CD8-positive, alpha-beta T cell (primary cell): ENCODE measurements at regions of chr1 and their contacts with region 1.

Region 1: GRCh38 chr1:212455803-212456528 is 23.2 kb downstream of the NENF start:
- DNase-seq: peak; percentile 68 to 92 (median 81)
- ATAC-seq: peak; percentile 80
- H3K4me3 ChIP-seq: no peak overlapping the region
- H3K4me3 Mint-ChIP-seq: no peak overlapping the region
- H3K27ac ChIP-seq: no peak overlapping the region
- H3K27ac Mint-ChIP-seq: no peak overlapping the region
- H3K4me1 ChIP-seq: no peaks in the 10 kb centered on the region
- H3K4me1 Mint-ChIP-seq: peaks cover 2% of the 10 kb centered on the region
- H3K27me3 ChIP-seq: no peaks in the 10 kb centered on the region
- H3K27me3 Mint-ChIP-seq: no peaks in the 10 kb centered on the region
- CTCF ChIP-seq: peak; percentile 94

Region 2: GRCh38 chr1:211680752-211681327 is 775.1 kb before region 1 on chr1:
- CTCF ChIA-PET with region 1: interaction called, 56 read pairs
- POLR2A ChIA-PET with region 1: interaction called, 4 read pairs
- intact Hi-C with region 1: loop called (anchors 1 kb)
- DNase-seq: peak; percentile 45 to 93 (median 74)
- ATAC-seq: peak; percentile 93
- H3K4me3 ChIP-seq: no peak overlapping the region
- H3K4me3 Mint-ChIP-seq: no peak overlapping the region
- H3K27ac ChIP-seq: peak overlapping the region; percentile 18 to 85
- H3K27ac Mint-ChIP-seq: peak overlapping the region; percentile 94
- H3K4me1 ChIP-seq: peaks cover 8% of the 10 kb centered on the region
- H3K4me1 Mint-ChIP-seq: peaks cover 19% of the 10 kb centered on the region
- H3K27me3 ChIP-seq: no peaks in the 10 kb centered on the region
- H3K27me3 Mint-ChIP-seq: no peaks in the 10 kb centered on the region
- CTCF ChIP-seq: peak; percentile 88

Region 3: DNA sequence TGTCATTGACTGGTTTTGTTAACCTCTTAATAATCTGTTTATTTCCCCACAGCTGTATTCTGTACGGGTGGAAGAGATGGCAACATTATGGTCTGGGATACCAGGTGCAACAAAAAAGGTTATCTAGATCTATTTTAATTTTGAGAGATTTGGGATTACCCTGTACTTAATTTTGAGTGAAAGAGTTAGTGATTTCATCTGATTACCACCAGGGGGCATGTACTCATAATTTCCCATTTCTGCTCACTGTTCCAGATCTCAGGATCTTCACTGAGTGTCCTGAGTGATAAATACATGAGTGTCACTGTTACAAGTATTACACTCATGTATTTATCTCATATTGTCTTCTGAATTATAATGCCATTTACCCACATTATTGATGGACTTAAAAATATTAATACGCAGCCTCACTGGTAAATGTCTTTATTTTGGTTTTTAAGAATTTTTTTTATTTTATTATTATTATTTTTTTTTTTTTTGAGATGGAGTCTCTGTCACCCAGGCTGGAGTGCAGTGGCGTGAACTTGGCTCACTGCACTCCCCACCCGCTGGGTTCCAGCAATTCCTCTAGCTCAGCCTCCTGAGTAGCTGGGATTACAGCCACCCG is 393.0 kb before region 1 on chr1:
- CTCF ChIA-PET with region 1: interaction called, 133 read pairs
- POLR2A ChIA-PET with region 1: no interaction called
- intact Hi-C with region 1: loop called (anchors 1 to 2 kb)
- DNase-seq: peak in 2 of 9 experiments; percentile 39 to 59
- ATAC-seq: peak; percentile 62
- H3K4me3 ChIP-seq: no peak overlapping the region
- H3K4me3 Mint-ChIP-seq: no peak overlapping the region
- H3K27ac ChIP-seq: no peak overlapping the region
- H3K27ac Mint-ChIP-seq: no peak overlapping the region
- H3K4me1 ChIP-seq: no peaks in the 10 kb centered on the region
- H3K4me1 Mint-ChIP-seq: no peaks in the 10 kb centered on the region
- H3K27me3 ChIP-seq: no peaks in the 10 kb centered on the region
- H3K27me3 Mint-ChIP-seq: no peaks in the 10 kb centered on the region
- CTCF ChIP-seq: peak; percentile 74

Region 4: DNA sequence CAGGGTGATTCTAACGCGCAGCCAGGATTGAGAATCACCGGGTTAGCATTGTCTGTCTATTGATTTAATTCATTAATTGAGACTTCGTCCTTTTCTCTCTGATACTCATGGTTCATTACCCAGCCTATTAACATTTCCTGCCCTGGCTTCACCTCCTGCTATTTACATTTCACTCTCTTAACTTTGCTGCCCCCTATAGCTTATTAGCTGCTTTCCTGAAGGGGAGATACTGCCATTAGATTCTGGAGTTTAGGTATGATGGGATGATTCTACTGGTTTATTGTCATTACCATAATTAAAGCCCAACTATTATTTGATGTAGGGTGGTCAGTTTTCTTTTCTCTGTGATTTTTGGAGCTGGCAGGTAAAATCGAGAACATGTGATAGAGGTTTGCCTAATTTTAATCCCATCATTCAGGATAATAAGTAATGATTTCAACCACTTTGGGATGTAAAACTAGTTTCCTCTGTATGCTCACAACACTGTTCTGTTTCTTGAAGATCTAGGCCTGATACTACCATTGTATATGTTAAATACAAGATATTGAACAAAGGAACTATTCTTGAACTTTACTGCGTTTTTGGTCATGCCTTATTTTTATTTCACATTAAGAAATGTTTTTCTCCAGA is 164.3 kb before region 1 on chr1:
- CTCF ChIA-PET with region 1: interaction called, 20 read pairs
- POLR2A ChIA-PET with region 1: interaction called, 3 read pairs
- intact Hi-C with region 1: loop called in 1 of 2 experiments (anchors 1 kb)
- DNase-seq: peak in 2 of 9 experiments; percentile 71 to 81
- ATAC-seq: peak; percentile 73
- H3K4me3 ChIP-seq: no peak overlapping the region
- H3K4me3 Mint-ChIP-seq: peak overlapping the region; percentile 38
- H3K27ac ChIP-seq: no peak overlapping the region
- H3K27ac Mint-ChIP-seq: peak overlapping the region; percentile 16
- H3K4me1 ChIP-seq: peaks cover 63% of the 10 kb centered on the region
- H3K4me1 Mint-ChIP-seq: peaks cover 87% of the 10 kb centered on the region
- H3K27me3 ChIP-seq: no peaks in the 10 kb centered on the region
- H3K27me3 Mint-ChIP-seq: no peaks in the 10 kb centered on the region
- CTCF ChIP-seq: peak; percentile 73

Region 5: GRCh38 chr1:212432706-212433576 is 23.0 kb before region 1 on chr1 and contains the start of gene NENF:
- CTCF ChIA-PET with region 1: interaction called, 17 read pairs
- POLR2A ChIA-PET with region 1: no interaction called
- intact Hi-C with region 1: loop called in 1 of 2 experiments (anchors 2 kb)
- DNase-seq: peak; percentile 44 to 86 (median 70)
- ATAC-seq: peak; percentile 99
- H3K4me3 ChIP-seq: peak within 1 kb of the TSS; percentile 61 to 71
- H3K4me3 Mint-ChIP-seq: peak within 1 kb of the TSS; percentile 81
- H3K27ac ChIP-seq: peak within 1 kb of the TSS in 1 of 2 experiments; percentile 55
- H3K27ac Mint-ChIP-seq: peak within 1 kb of the TSS; percentile 74
- H3K4me1 ChIP-seq: peaks cover 17% of the 10 kb centered on the region
- H3K4me1 Mint-ChIP-seq: peaks cover 34% of the 10 kb centered on the region
- H3K27me3 ChIP-seq: no peaks in the 10 kb centered on the region
- H3K27me3 Mint-ChIP-seq: no peaks in the 10 kb centered on the region
- CTCF ChIP-seq: no peak
- total RNA-seq, gene NENF: 17.7 to 20.3 TPM

Region 6: DNA sequence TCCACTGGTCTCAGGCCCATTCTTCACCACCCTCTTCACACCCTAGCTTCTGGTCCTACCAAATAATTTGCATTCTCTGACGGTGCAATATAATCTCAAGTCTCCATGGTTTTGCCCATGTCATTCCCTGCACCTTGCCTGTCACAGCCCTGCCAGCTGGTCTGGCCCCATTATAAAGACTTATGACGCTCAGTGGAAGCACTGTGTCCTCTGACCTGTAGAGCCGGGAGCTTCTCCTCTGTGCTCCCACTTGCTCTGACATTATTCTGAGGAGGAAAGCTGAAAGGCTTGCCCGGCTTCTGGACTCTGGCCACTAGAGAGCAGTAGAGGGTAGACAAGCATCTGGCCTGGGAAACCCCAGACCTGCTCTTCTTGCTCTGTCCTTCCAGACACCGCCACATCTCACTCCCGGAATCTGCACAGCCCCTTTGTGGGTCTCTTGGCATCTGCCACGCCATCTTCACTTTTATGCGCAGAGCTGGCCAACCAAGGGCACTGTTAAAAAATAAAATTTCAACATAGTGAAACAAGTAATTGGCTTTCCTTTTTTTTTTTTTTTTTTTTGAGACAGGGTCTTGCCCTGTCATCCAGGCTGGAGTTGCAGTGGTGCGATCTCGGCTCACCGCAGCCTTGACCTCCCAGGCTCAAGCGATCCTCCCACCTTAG is 21.2 kb after region 1 on chr1:
- CTCF ChIA-PET with region 1: interaction called, 77 read pairs
- POLR2A ChIA-PET with region 1: no interaction called
- intact Hi-C with region 1: no loop called
- DNase-seq: peak; percentile 50 to 87 (median 75)
- ATAC-seq: peak; percentile 96
- H3K4me3 ChIP-seq: no peak overlapping the region
- H3K4me3 Mint-ChIP-seq: peak overlapping the region; percentile 18
- H3K27ac ChIP-seq: no peak overlapping the region
- H3K27ac Mint-ChIP-seq: no peak overlapping the region
- H3K4me1 ChIP-seq: no peaks in the 10 kb centered on the region
- H3K4me1 Mint-ChIP-seq: peaks cover 12% of the 10 kb centered on the region
- H3K27me3 ChIP-seq: no peaks in the 10 kb centered on the region
- H3K27me3 Mint-ChIP-seq: peaks cover 4% of the 10 kb centered on the region
- CTCF ChIP-seq: peak; percentile 90